PC-3 (cell line): ENCODE measurements at regions of chr3 and their contacts with region 1.

Region 1: DNA sequence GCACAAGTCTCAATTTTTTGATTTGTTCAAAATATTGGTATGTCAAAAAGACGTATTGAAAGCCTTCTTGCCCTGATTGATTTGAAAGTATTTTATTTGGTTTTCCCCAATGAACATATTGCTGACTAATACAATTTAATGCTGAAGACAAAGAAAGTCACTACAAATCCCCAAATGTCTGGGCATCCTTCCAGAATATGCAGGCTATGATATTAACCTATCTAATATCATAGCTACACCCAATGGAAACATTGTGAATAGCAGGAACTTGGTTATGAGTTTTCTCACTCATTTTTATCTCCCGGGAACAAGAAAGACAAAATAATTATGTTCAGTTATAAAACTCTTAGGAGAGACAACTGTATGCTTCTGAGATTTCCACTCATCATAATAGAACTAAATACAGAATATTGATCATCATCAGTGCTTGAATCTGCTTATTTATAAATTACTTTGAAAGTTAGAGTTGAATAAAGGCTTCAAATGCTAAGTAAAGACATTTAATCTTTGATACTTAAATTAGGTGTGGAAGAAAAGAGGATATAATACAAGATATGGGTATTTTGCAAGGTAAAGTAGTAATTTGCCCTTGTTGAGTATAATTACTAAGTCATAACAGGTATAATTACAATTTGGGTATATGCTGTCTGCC is 483.9 kb downstream of the RBMS3 start:
- DNase-seq: peak; percentile 94
- ATAC-seq: peak; percentile 70
- H3K4me3 ChIP-seq: no peak overlapping the region
- H3K27ac ChIP-seq: no peak overlapping the region
- H3K4me1 ChIP-seq: peaks cover 9% of the 10 kb centered on the region; the same call in 1 of the 2 replicates
- H3K27me3 ChIP-seq: no peaks in the 10 kb centered on the region
- CTCF ChIP-seq: peak; percentile 93

Region 2: GRCh38 chr3:28799084-28799483 is 965.6 kb before region 1 on chr3:
- CTCF ChIA-PET with region 1: no interaction called
- POLR2A ChIA-PET with region 1: no interaction called
- intact Hi-C with region 1: loop called (anchors 5 kb)
- DNase-seq: peak; percentile 42
- ATAC-seq: peak; percentile 57
- H3K4me3 ChIP-seq: no peak overlapping the region
- H3K27ac ChIP-seq: no peak overlapping the region
- H3K4me1 ChIP-seq: peaks cover 9% of the 10 kb centered on the region; the same call in 1 of the 2 replicates
- H3K27me3 ChIP-seq: no peaks in the 10 kb centered on the region
- CTCF ChIP-seq: peak; percentile 47

Region 3: DNA sequence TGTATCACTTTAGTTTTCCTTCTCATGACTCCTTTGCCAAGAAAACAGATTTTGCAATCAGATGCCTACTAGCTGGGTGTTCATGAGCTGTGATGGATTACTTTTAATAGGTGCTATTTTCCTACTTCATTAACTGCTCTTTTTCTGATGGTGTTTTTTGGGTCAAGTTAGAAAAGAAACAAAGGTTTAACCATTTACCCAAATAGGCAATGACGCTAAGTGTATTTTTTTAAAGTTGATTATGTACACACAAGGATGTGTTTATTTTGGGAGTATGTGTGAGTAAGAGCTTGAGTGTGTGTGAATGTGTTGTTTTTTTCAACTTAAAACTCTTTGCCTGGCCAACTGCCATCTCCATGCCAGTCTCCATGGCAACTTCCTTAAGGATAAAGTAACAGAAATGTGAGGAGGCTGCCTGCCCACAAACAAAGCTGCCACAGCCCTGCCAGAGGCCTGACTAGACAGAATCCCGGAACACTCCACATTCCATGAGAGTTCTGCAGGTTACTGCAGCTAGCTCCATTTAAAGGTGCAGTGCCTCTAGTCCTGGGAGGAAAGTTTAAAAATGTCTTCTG is 699.4 kb before region 1 on chr3:
- CTCF ChIA-PET with region 1: no interaction called
- POLR2A ChIA-PET with region 1: no interaction called
- intact Hi-C with region 1: loop called (anchors 5 kb)
- DNase-seq: peak; percentile 98
- ATAC-seq: peak; percentile 100
- H3K4me3 ChIP-seq: no peak overlapping the region
- H3K27ac ChIP-seq: peak overlapping the region; percentile 61
- H3K4me1 ChIP-seq: peaks cover 14% of the 10 kb centered on the region
- H3K27me3 ChIP-seq: no peaks in the 10 kb centered on the region
- CTCF ChIP-seq: no peak

Region 4: DNA sequence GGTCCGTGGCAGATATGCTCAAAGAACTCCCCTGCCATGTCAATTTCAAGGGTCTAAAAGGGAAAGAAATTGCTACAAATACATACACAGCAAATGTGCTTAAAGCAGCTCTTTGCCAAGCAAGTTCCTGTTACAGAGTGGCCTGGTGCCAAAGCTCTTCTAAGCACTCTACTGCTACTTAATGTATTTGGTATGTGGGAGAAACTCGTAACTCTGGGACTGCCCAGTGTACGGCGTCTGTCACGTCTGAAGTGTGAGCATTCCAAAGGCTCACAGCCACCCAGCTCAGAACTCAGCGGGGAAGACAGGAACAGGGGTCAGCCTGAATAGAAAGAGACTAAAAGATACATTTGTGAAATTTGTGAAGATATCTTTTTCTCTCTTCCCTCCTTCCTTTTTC is 429.3 kb before region 1 on chr3:
- CTCF ChIA-PET with region 1: no interaction called
- POLR2A ChIA-PET with region 1: no interaction called
- intact Hi-C with region 1: loop called (anchors 5 kb)
- DNase-seq: peak; percentile 96
- ATAC-seq: peak; percentile 99
- H3K4me3 ChIP-seq: peak overlapping the region; percentile 52
- H3K27ac ChIP-seq: peak overlapping the region; percentile 64
- H3K4me1 ChIP-seq: peaks cover 21% of the 10 kb centered on the region
- H3K27me3 ChIP-seq: no peaks in the 10 kb centered on the region
- CTCF ChIP-seq: no peak

Region 5: DNA sequence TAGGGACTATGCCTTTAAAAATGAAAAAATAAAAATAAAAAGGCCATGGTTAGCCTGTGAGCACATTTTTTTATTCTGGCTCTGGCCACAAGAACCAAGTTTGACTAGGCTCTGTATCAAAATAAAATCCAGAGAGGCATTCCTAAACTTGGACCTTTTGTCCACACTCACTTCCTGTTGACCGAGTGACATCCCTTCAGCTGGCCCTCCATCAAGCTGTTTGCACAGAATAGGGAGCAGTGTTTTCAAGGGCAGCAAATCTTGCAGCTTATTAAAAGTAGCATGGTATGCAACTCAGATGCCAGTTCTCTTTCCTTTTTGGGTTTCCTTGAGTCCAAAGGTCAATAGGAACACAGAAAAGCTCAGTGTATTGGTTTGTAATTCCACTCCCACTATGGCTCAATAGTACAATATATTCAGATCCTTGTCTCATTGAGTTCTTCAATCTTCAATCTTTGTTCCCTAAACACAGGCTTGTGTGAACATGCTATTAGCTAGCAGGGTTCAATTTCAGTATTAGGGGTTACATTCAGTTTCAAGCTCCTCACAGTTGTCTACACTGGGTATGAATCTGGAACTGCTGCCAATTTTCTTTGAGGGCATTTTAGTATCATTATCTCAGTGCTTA is 239.4 kb before region 1 on chr3:
- CTCF ChIA-PET with region 1: interaction called, 3 read pairs
- POLR2A ChIA-PET with region 1: no interaction called
- intact Hi-C with region 1: loop called (anchors 1 kb)
- DNase-seq: peak; percentile 60
- ATAC-seq: peak; percentile 91
- H3K4me3 ChIP-seq: no peak overlapping the region
- H3K27ac ChIP-seq: no peak overlapping the region
- H3K4me1 ChIP-seq: peaks cover 12% of the 10 kb centered on the region; the same call in 1 of the 2 replicates
- H3K27me3 ChIP-seq: no peaks in the 10 kb centered on the region
- CTCF ChIP-seq: no peak

Region 6: GRCh38 chr3:29871087-29871486 is 106.4 kb after region 1 on chr3:
- CTCF ChIA-PET with region 1: no interaction called
- POLR2A ChIA-PET with region 1: no interaction called
- intact Hi-C with region 1: no loop called
- DNase-seq: peak; percentile 46
- ATAC-seq: peak; percentile 78
- H3K4me3 ChIP-seq: no peak overlapping the region
- H3K27ac ChIP-seq: no peak overlapping the region
- H3K4me1 ChIP-seq: no peaks in the 10 kb centered on the region
- H3K27me3 ChIP-seq: no peaks in the 10 kb centered on the region
- CTCF ChIP-seq: peak; percentile 61